ENCODE measurements at regions of chr2 and their contacts with region 1.

Region 1: GRCh38 chr2:21395366-21395765 is 271.6 kb downstream of the TDRD15 start:
- DNase-seq: peak in 6 of 10 donors; percentile 19 to 58 (median 48)
- H3K4me3 ChIP-seq: no peak overlapping the region
- H3K27ac ChIP-seq: no peak overlapping the region
- H3K27me3 ChIP-seq: peaks cover 0 to 10% (median 0%) of the 10 kb centered on the region in 45 donors
- CTCF ChIP-seq: peak in 54 of 56 donors; percentile 19 to 80 (median 56)

Region 2: DNA sequence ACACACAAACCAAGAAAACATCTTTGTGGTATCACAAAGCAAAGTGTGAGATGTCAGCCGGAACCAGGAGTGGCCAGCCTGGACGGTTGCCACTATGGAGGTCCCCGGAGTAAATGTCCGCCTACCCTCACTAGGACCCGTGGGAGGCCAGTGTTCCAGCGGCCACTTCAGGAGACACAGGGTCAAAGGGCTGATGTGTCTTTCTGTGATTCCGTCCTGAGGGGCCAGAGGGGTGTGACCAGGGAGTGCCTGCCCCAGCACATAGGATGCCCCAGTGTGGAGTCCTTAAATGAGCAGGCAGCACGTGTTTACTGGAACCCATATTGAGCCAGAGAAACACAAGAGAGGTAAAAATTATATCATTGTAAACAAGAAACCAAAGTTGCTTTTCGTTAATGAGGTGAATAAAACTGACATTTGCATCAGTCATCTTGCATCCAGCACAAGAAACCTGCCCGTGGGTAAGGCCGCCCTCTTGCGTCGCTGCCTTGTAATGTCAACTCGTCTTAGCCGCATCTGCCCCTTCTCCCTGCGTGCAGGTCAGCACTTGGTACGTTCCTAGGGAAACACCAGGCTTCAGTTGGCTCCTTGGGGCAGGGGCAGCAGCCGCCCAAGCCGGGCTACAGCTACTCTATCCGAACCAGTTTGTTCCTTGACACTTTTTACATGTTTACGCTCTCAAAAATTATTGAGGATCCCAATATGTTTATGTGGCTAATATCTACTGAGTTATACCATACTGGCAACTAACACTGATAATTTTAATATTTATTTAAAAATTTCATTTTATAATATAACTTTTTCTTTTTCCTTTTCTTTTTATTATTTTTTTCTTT is 1297.3 kb before region 1 on chr2:
- intact Hi-C with region 1: no loop called
- DNase-seq: peak; percentile 62 to 85 (median 80)
- H3K4me3 ChIP-seq: peak overlapping the region in 6 of 59 donors; percentile 0 to 15 (median 6)
- H3K27ac ChIP-seq: no peak overlapping the region
- H3K27me3 ChIP-seq: peaks cover 0 to 4% (median 0%) of the 10 kb centered on the region in 45 donors
- CTCF ChIP-seq: peak; percentile 40 to 96 (median 85)

Region 3: GRCh38 chr2:21042958-21043743 is 352.2 kb before region 1 on chr2:
- intact Hi-C with region 1: loop called in 1 of 2 experiments (anchors 10 kb)
- DNase-seq: peak; percentile 44 to 82 (median 64)
- H3K4me3 ChIP-seq: peak overlapping the region in 57 of 59 donors; percentile 10 to 65 (median 42)
- H3K27ac ChIP-seq: peak overlapping the region in 1 of 59 donors; percentile 44
- H3K27me3 ChIP-seq: peaks cover 0 to 9% (median 0%) of the 10 kb centered on the region in 45 donors
- CTCF ChIP-seq: peak; percentile 86 to 100 (median 99)

Region 4: DNA sequence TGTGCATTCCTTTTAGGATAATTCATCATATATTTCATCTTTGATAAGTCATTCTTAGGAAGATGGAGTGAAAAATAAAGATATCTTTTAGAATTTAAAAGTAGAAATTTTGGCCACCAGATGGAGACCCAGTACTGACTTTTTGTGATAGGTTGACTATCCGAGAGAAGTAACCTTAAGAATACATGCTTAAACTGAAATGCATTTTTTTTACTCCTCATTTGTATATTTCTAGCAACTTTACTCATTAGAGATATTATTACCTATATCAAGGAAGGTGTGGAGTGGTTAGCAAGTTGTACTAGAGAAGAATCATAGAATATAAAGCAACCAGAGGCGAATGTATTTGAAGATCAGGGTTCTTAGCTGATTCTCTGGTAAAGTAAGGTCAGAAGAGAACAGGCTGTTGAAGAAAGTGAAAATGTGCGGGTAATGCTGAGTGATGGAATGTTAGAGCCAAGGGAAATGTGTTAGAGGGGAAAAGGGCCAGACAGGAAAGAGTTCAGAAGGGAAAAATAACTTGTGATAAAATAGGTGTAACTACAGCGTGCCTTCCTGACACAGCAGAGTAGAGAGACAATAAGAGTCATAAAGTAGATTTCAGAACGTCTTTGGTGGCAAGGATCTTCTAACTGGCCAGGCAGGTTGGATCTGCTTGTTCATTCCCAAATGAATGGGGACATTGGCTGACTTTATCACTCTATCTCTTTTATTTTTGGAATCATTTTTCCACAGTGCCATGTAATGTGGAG is 219.3 kb before region 1 on chr2:
- intact Hi-C with region 1: loop called (anchors 2 to 5 kb)
- DNase-seq: no peak
- H3K4me3 ChIP-seq: peak overlapping the region in 1 of 59 donors; percentile 2
- H3K27ac ChIP-seq: peak overlapping the region in 53 of 59 donors; percentile 1 to 86 (median 62)
- H3K27me3 ChIP-seq: no peaks in the 10 kb centered on the region
- CTCF ChIP-seq: peak; percentile 52 to 90 (median 74)

Region 5: DNA sequence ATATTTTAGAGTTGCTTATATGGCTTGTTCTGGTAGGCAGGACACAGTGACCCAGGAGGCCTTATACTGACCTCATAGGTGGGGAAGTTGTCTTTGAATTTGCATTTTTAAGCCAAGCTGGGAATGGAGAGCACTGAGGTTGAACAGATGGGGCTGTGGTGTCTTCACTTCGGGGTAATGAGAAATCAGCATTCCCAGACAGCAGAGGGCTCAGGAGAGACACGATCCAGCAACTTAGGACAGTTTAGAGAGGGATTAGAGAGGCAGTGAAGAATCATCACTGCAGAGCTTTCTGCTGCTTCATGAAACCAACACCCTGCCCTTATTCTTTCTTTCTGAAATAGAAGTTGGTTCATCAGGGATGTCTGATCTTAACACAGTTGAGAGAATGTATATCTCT is 69.2 kb before region 1 on chr2:
- intact Hi-C with region 1: loop called in 1 of 2 experiments (anchors 1 kb)
- DNase-seq: no peak
- H3K4me3 ChIP-seq: no peak overlapping the region
- H3K27ac ChIP-seq: no peak overlapping the region
- H3K27me3 ChIP-seq: peaks cover 0 to 7% (median 0%) of the 10 kb centered on the region in 45 donors
- CTCF ChIP-seq: peak in 39 of 56 donors; percentile 12 to 61 (median 31)

Region 6: DNA sequence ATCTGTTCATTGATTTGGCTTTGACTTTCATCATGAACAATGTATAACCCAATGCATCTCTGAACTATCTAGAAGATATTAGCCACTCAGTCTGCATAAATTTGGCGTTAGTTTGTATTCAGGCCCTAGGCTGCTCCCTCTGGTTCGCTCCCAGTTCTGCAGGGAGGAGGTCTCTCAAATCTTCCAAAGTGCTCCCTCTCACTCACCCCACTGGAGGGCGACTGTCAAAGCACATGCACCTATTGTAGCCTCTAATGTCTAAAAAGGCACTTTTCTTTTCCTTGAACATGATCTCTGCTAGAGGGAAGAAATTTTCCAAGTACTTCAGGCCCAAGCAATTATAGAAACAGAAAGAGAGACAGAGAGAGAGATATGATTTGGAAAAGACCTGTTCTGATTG is 19.9 kb after region 1 on chr2:
- intact Hi-C with region 1: no loop called
- DNase-seq: no peak
- H3K4me3 ChIP-seq: no peak overlapping the region
- H3K27ac ChIP-seq: no peak overlapping the region
- H3K27me3 ChIP-seq: peaks cover 0 to 5% (median 0%) of the 10 kb centered on the region in 45 donors
- CTCF ChIP-seq: no peak

Region 7: DNA sequence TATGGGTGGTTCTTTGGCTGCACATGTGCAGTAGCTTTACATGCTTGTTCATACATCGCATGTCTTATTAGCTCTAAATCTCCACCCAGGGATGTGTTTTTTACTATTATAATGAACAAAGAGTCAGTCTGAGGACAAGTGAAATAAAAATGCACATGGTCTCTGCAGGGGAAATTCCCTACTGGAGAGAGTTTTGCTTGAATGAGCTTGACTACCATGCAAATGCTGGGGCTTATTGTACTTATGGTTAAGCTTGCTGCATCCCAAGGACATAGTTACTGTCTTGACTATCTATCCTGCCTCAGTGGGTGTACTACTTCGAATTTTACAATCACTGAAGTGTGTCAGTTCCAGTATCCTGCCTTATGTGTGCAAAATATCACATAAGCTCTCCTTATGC is 91.1 kb after region 1 on chr2:
- intact Hi-C with region 1: no loop called
- DNase-seq: no peak
- H3K4me3 ChIP-seq: no peak overlapping the region
- H3K27ac ChIP-seq: no peak overlapping the region
- H3K27me3 ChIP-seq: peaks cover 0 to 2% (median 0%) of the 10 kb centered on the region in 45 donors
- CTCF ChIP-seq: no peak

Region 8: DNA sequence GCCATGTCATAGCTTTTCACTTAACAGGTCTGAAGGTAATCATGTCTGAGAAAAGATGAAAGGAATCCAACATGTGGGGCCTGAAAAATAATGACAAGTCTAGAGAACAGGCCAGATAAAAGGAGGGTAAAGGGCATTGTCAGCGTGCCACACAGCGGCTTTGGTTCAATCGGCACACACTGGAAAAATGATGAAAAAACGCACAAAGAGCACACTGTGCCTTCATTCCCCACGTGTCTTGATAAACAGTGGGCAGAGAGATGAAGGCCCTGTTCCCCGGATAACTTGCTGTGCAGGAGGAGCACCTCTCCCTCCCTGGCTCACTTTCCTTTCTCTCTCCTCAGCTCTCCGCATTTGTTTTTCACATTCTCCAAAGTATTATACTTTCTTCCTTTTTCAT is 494.7 kb after region 1 on chr2:
- intact Hi-C with region 1: loop called in 1 of 2 experiments (anchors 10 kb)
- DNase-seq: peak in 8 of 10 donors; percentile 27 to 74 (median 48)
- H3K4me3 ChIP-seq: no peak overlapping the region
- H3K27ac ChIP-seq: peak overlapping the region in 38 of 59 donors; percentile 13 to 87 (median 50)
- H3K27me3 ChIP-seq: no peaks in the 10 kb centered on the region
- CTCF ChIP-seq: peak in 31 of 56 donors; percentile 7 to 71 (median 35)